Activated CD4-positive, alpha-beta memory T cell treated with anti-CD3 and anti-CD28 coated beads for 36 hours (primary cell): ENCODE measurements at regions of chr3 and their contacts with region 1.

Region 1: DNA sequence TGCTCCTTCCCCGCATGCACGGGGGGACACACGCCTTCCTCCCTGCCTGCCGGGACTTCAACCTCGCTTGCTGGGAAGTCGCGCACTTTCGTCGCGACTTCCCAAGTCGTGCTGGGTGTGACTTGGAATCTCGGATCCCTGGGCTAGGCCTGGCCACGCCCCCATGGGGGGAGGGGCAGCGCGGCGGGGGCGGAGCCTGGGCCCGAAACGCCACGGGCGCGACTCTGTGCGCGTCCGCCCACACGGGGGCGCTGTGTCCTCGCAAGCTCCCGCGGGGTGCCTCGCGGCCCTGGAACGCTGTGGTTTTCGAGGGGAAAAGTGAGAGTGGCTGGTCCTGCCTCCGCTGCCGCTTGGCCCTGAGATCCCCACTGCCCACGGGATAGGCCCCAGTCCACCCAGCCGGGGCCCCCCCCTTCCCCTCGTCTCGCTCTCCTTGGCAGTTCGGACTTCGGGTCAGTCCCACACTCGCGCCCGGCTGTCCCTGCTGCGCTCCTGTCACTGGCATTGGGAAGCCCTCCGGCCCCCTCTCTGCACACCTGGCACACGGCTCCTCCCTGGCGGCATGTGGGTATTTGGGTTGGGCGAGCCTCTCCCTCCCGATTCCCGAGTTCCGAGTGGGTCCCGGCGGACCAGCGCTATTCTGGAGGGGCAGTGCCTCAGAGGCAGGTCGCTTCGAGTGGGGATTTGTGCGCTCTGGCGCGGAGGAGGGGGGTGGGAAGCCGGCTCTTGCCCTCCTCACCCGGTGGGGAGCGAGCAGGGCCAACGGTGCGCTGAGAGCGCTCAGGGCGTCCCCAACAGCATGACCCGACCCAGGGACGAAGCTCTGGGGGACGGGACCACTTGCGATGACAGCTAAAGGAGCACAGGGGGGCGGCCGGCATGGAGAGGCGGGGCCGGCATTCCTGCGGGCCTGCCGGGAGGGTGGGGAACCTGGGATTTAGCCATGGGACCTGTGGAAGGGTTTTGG is 23.6 kb downstream of the SEC61A1 start:
- DNase-seq: peak; percentile 87
- H3K4me3 Mint-ChIP-seq: peak overlapping the region; percentile 53
- H3K27ac Mint-ChIP-seq: peak overlapping the region; percentile 42
- H3K4me1 Mint-ChIP-seq: peaks cover 21% of the 10 kb centered on the region
- H3K27me3 Mint-ChIP-seq: no peaks in the 10 kb centered on the region

Region 2: GRCh38 chr3:127672516-127673190 is 403.1 kb before region 1 on chr3 and contains the start of gene ABTB1:
- CTCF ChIA-PET with region 1: no interaction called
- POLR2A ChIA-PET with region 1: no interaction called
- intact Hi-C with region 1: no loop called
- DNase-seq: peak; percentile 91
- H3K4me3 Mint-ChIP-seq: peak within 1 kb of the TSS; percentile 89
- H3K27ac Mint-ChIP-seq: peak within 1 kb of the TSS; percentile 89
- H3K4me1 Mint-ChIP-seq: peaks cover 23% of the 10 kb centered on the region
- H3K27me3 Mint-ChIP-seq: no peaks in the 10 kb centered on the region
- total RNA-seq, gene ABTB1: 14.8 TPM

Region 3: GRCh38 chr3:128051837-128052594 is 23.8 kb before region 1 on chr3 and contains the start of gene SEC61A1:
- CTCF ChIA-PET with region 1: interaction called, 9 read pairs
- POLR2A ChIA-PET with region 1: interaction called, 5 read pairs
- intact Hi-C with region 1: loop called (anchors 2 kb)
- DNase-seq: peak; percentile 97
- H3K4me3 Mint-ChIP-seq: peak within 1 kb of the TSS; percentile 98
- H3K27ac Mint-ChIP-seq: peak within 1 kb of the TSS; percentile 90
- H3K4me1 Mint-ChIP-seq: peaks cover 36% of the 10 kb centered on the region
- H3K27me3 Mint-ChIP-seq: no peaks in the 10 kb centered on the region
- total RNA-seq, gene SEC61A1: 147 to 149 TPM

Region 4: DNA sequence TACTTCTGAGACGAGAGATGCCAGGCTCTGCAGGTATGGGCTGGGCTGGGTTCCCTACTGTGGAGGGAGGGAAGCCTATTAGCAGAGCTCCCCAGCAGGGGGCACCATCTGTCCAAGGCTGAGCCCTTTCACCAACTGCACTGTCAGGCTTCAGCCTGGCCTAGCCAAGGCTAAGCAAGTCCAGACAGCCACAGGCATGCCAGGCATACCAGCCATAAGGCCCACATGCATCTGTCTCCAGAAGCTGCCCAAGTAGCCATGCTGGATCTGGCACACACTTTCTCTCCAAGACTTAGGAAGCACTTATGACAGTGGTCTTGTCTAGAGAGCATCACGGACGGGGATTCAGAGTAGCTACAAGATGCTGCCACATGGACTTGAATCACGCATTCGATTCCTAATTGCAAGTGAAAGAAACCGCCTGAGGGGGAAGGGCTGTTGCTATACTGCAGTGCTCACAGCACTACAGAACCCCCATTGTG is 19.5 kb after region 1 on chr3:
- CTCF ChIA-PET with region 1: interaction called, 10 read pairs
- POLR2A ChIA-PET with region 1: no interaction called
- intact Hi-C with region 1: no loop called
- DNase-seq: peak; percentile 84
- H3K4me3 Mint-ChIP-seq: no peak overlapping the region
- H3K27ac Mint-ChIP-seq: no peak overlapping the region
- H3K4me1 Mint-ChIP-seq: peaks cover 4% of the 10 kb centered on the region
- H3K27me3 Mint-ChIP-seq: no peaks in the 10 kb centered on the region

Region 5: GRCh38 chr3:128112357-128112968 is 36.7 kb after region 1 on chr3:
- CTCF ChIA-PET with region 1: interaction called, 4 read pairs
- POLR2A ChIA-PET with region 1: no interaction called
- intact Hi-C with region 1: loop called (anchors 5 kb)
- DNase-seq: peak; percentile 76
- H3K4me3 Mint-ChIP-seq: peak overlapping the region; percentile 30
- H3K27ac Mint-ChIP-seq: peak overlapping the region; percentile 95
- H3K4me1 Mint-ChIP-seq: peaks cover 45% of the 10 kb centered on the region
- H3K27me3 Mint-ChIP-seq: no peaks in the 10 kb centered on the region

Region 6: GRCh38 chr3:128133273-128134084 is 57.7 kb after region 1 on chr3:
- CTCF ChIA-PET with region 1: interaction called, 17 read pairs
- POLR2A ChIA-PET with region 1: no interaction called
- intact Hi-C with region 1: no loop called
- DNase-seq: peak; percentile 56
- H3K4me3 Mint-ChIP-seq: no peak overlapping the region
- H3K27ac Mint-ChIP-seq: no peak overlapping the region
- H3K4me1 Mint-ChIP-seq: no peaks in the 10 kb centered on the region
- H3K27me3 Mint-ChIP-seq: peaks cover 1% of the 10 kb centered on the region

Region 7: GRCh38 chr3:128487813-128488635 is 412.2 kb after region 1 on chr3:
- CTCF ChIA-PET with region 1: no interaction called
- POLR2A ChIA-PET with region 1: no interaction called
- intact Hi-C with region 1: loop called (anchors 2 kb)
- DNase-seq: peak; percentile 52
- H3K4me3 Mint-ChIP-seq: no peak overlapping the region
- H3K27ac Mint-ChIP-seq: no peak overlapping the region
- H3K4me1 Mint-ChIP-seq: peaks cover 42% of the 10 kb centered on the region
- H3K27me3 Mint-ChIP-seq: peaks cover 71% of the 10 kb centered on the region

Region 8: DNA sequence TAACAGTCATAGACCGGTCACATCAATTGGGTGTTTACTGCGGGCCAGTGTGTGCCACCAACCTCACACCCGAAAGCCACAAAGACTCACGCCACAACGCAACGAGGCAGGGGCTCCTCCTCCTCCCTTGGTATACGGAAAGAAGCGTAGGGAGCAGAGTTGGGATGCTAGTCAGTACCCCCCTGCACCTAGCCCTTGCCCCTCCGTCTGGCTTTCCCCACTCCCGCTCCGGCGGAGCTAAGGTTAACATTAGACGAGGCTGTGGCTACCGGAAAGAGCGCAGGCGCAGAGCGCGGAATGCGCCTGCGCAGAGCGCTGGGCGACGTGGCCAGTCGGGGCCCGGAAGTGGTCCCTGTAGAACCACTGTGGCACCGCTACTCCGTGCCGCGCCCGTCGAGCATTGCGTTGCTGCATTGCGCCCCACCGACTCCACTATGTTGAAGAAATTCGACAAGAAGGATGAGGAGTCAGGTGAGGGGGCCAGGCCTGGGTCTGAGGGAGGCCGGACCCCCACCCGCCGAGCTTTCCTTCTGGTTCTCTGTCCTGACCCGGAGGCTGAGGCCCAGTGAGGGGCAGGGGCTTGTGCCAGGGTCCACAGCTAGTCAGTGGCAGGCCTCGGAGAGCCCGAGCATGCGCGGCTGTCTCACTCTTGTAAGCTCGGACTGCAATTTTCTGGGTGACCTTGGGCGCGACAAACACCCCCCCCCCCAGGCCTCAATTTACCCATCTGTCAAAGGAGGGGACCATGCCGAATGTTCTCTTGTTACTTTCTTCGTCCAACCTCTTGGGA is 1173.7 kb after region 1 on chr3 and contains the start of gene COPG1:
- CTCF ChIA-PET with region 1: no interaction called
- POLR2A ChIA-PET with region 1: no interaction called
- intact Hi-C with region 1: no loop called
- DNase-seq: peak; percentile 92
- H3K4me3 Mint-ChIP-seq: peak within 1 kb of the TSS; percentile 89
- H3K27ac Mint-ChIP-seq: peak within 1 kb of the TSS; percentile 93
- H3K4me1 Mint-ChIP-seq: peaks cover 38% of the 10 kb centered on the region
- H3K27me3 Mint-ChIP-seq: no peaks in the 10 kb centered on the region
- total RNA-seq, gene COPG1: 154 to 162 TPM